GM10248 (cell line): ENCODE measurements at regions of chr18 and their contacts with region 1.

Region 1: DNA sequence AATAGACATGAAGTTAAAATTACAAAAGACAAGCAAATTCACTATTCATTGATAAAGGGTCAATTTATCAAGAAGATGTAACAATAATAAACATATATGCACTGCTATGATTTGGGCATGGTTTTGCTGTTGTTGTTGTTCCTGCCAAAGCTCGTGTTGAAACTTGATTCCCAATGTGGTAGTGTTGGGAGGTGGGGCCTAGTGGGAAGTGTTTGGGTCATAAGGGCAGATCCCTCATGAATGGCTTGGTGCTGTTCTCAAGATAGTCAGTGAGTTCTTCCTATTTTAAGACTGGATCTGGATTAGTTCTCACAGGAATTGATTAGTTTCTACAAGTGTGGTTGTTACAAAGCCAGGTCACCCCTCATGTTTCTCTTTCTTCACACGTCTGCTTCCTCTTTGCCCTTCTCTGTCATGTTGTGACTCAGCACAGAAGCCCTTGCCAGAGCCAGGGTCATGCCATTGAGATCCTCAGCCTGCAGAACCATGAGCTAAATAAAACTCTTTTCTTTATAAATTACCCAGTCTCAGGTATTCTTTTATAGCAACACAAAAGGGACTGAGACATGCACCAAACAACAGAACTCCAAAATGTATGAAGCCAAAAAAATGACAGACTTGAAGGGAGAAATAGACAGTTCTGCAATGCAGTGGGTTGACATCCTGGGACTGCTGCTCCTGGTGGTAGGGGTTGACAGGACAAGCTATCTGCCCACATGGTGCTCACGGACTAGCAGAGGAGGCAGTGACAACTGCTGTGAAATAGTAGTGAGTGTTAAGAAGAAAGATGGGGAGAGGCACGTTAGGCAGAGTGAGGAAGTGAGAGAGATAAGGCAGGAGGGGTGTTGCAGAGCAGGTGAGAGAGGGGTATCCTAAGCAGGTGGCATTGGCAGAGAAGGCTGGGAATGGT is 18.6 kb upstream of the SKA1 start:
- DNase-seq: peak; percentile 34
- CTCF ChIP-seq: peak; percentile 30

Region 2: GRCh38 chr18:50107468-50107867 is 248.8 kb before region 1 on chr18:
- CTCF ChIA-PET with region 1: no interaction called
- POLR2A ChIA-PET with region 1: no interaction called
- DNase-seq: no peak
- CTCF ChIP-seq: no peak

Region 3: DNA sequence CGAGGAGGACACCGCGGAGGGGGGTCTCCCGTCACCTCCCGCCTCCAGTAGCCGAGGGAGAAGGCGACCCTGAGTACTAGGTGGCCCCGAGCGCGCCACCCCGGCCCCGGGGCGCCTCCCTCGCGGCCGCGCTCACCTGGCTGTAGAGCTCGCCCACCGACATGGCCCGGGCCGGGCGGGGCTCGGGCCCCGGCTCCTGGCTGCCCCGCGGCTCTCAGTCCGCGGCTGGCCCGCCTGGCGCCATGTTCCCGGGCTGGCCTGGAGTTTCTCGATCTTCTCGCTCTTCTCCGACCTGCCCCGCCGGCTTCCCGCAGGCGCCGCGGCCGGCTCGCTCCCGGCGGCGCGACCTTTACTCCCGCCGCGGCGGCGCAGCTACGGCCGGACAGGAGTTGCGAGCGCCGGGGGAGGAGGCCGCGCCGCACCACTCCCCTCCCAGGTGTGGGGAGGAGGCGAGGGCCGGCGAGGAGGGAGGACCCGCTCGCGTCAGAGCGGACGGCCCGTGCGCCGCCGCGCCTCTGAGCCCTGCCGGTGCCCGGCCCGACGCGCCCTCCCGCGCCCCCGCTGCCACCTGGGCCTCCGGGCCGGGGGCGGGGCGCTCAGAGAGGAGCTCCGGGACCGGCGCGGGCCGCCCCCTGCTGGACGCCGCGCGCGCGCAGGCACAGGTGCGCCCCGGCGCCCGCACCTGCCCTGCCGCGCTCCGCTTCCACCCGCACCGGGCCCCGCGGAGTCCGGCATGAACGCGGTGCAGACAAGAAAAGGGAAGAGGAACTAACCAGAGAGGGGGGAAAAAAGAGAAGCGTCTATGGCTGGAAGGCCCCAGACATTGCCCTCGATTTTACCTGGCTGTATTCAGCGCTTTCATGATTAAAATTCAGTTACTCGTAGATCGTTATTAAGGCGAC is 161.4 kb before region 1 on chr18 and contains the start of gene MYO5B:
- CTCF ChIA-PET with region 1: interaction called, 24 read pairs
- POLR2A ChIA-PET with region 1: no interaction called
- DNase-seq: peak; percentile 83
- CTCF ChIP-seq: peak; percentile 63

Region 4: DNA sequence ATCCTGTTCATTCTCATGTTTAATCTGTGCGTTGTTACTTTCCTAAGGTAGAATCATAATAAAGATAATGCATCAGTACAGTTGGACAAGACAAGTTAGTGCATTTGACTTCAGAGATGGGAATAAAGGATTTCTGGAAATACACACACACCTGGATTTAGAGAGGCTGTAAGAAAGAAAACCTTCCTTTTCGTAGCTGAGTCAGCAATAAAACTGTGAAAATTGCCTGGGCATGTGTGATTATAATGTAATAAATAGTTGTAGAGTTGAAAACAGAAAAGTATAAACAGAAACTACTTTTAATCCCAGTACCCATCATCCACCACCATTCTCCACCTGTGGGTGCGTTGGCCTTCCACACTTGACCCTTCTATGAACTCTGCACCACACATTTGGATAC is 105.4 kb before region 1 on chr18:
- CTCF ChIA-PET with region 1: interaction called, 11 read pairs
- POLR2A ChIA-PET with region 1: no interaction called
- DNase-seq: no peak
- CTCF ChIP-seq: no peak

Region 5: DNA sequence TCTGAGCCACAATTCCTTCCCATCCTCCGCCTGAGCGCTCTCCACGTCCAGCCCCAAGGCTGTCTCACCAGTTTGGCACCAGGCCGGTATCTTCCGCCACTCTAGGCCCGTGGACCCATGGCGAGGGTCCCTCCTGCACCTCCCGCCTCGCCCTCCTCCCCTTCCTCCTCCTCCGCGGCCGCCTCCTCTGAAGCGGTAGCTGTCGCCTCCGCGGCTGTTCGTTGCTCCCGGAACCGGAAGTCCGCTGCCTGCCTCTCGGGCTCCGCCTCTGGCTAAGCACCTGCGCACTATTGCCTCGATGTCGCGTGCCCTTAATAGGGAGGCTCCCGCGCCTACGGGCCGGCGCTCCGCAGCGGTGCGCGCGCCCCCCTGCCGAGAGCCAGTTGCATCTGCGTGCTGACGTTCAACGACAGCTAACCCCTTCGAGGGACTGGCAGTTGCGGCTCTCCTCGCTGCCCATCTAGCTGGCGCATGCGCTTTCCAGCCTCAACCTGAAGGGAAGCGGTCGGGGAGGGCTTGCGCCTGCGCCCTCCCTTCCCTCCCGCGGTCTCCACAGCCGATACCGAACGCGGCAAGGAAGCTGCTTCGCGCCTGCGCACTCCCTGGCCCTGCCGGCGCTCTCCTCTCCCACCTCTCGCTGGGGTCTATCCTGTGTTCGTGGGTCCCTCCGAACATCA is 74.9 kb before region 1 on chr18 and contains the start of gene MBD1:
- CTCF ChIA-PET with region 1: interaction called, 27 read pairs
- POLR2A ChIA-PET with region 1: interaction called, 4 read pairs
- DNase-seq: peak; percentile 98
- CTCF ChIP-seq: no peak

Region 6: DNA sequence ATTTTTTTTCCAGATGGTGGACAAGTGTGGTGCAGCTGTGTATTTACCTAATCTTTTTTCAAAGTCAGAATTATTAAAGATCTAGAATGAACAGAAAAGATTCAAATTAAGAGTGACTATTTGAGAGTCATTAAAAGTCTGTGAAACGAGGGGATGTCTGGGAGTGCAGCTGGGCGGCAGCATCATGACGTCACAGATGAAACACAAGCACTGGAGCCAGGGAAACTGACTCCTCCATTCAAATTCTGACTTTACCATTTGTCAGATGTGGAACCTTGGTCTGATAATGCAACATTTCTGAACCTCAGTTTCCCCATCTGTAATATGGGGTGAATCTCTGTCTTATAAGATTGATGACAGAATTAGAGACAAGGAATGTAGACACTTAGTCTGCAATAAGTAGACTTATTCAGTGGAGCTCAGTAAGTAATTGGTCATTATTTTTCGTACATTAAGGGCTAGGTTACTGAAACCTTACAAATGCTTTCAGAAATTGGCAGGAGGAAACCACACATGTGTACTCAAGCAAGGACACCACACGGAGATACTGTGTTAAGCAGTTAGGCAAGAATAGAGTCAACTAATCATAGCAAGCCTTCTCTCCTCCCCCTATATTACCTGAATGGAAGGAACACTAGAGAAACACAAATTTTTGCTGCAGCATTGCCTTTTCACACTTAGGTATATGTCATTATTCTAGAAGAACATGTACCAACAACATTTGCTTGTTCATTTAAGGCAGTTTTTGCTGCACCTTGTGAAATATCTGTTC is 41.0 kb before region 1 on chr18:
- CTCF ChIA-PET with region 1: interaction called, 17 read pairs
- POLR2A ChIA-PET with region 1: no interaction called
- DNase-seq: peak; percentile 55
- CTCF ChIP-seq: no peak

Region 7: DNA sequence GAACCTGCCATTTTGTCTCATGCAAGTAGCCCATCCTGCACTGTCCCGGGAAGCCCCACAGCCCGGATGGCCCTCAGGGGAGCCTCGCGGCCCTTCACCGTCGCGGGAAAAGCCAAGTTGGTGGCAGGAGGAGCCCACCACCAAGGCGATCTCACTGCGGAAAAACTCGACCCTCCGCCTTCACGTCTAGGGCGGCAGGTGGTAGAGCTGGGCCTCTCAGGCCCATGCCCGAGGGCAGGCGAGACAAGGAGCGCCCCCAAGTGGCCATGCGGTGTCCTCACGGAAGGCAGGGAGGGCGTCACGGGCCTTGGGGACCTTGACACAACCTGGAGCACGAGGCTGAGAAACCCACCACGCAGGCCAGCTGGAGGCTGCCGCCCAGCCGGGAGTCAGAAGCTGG is 16.2 kb before region 1 on chr18:
- CTCF ChIA-PET with region 1: interaction called, 41 read pairs
- POLR2A ChIA-PET with region 1: no interaction called
- DNase-seq: no peak
- CTCF ChIP-seq: no peak

Region 8: DNA sequence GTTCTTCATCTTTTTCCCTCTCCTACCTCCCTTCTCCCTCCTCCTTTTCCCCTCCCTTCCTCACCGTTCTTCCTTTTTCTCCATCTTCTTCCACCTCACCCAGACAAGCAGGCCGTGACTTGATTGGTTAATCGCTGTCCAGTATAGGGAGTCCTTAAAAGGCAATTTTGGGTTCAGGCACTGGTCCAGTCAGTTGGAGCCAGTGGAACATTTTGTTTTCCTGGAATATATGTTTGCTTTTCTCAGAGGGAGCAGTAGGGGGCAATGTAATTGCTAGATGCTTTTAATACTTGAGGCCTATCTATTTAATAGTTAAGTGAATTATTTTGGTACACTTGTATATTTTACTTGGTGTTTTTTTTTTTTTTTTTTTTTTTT is 626.5 kb after region 1 on chr18:
- CTCF ChIA-PET with region 1: no interaction called
- POLR2A ChIA-PET with region 1: no interaction called
- DNase-seq: no peak
- CTCF ChIP-seq: no peak